ENCODE measurements at regions of chr3 and their contacts with region 1.

Region 1: GRCh38 chr3:139427283-139427993 is 38.0 kb upstream of the COPB2 start:
- DNase-seq: no peak
- ATAC-seq: peak; percentile 95 to 97
- H3K4me3 ChIP-seq: no peak overlapping the region
- H3K27ac ChIP-seq: no peak overlapping the region
- H3K4me1 ChIP-seq: peaks cover 9 to 11% of the 10 kb centered on the region in 2 donors
- H3K27me3 ChIP-seq: no peaks in the 10 kb centered on the region
- CTCF ChIP-seq: peak; percentile 59 to 80 (median 67)
- POLR2A ChIP-seq: no peak

Region 2: DNA sequence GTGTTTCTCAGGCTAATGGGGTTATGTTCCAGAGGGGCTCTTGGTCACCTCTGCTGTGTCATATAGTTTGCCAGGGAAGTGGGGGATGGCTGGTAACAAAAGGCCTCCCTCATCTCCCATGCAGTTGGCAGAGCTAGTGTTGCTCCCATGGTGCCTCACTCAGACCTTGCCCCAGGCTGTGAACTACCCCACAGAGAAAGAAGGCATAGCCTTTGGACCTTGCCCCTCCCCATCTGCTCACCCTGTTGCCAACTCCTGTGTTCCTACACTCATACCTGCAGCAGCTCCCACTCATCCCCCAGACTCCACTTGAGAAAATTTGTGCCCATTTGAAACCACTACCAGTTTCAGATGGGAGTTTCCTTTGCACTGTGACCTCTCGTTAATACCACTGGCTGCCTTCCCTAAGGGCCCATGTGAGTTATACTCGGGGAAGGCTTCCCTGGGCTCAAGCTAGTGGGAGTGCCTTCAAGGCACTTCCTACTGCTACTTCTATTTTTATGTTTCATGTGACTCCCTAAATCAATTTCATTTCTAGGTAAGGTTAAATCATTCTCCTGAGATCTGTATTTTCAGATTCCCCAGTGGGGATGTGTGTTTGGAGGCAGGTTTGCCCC is 12.7 kb before region 1 on chr3:
- in situ Hi-C with region 1: no loop called
- intact Hi-C with region 1: no loop called
- DNase-seq: no peak
- ATAC-seq: no peak
- H3K4me3 ChIP-seq: no peak overlapping the region
- H3K27ac ChIP-seq: no peak overlapping the region
- H3K4me1 ChIP-seq: peaks cover 0 to 4% of the 10 kb centered on the region in 2 donors
- H3K27me3 ChIP-seq: no peaks in the 10 kb centered on the region
- CTCF ChIP-seq: no peak
- POLR2A ChIP-seq: no peak

Region 3: DNA sequence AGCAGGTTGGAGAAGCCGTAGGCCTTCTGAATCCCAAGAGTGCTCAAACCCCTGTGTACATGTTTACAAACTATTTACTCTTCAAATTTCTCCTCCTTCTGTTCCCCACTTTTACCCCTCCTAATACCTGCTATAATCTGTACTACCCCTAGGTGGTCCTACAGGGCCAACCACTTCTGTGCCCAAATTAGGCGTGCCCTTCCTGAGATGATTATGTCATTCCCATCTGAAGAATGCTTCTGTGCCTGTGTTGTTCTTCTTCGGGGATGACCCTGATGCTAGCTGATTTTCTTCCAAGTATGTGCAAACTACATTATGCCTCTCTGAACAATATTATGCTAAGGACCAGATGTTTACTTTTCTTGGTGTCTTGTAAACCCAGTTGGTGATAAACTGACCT is 28.4 kb after region 1 on chr3:
- in situ Hi-C with region 1: no loop called
- intact Hi-C with region 1: no loop called
- DNase-seq: no peak
- ATAC-seq: no peak
- H3K4me3 ChIP-seq: no peak overlapping the region
- H3K27ac ChIP-seq: no peak overlapping the region
- H3K4me1 ChIP-seq: no peaks in the 10 kb centered on the region
- H3K27me3 ChIP-seq: no peaks in the 10 kb centered on the region
- CTCF ChIP-seq: no peak
- POLR2A ChIP-seq: no peak

Region 4: DNA sequence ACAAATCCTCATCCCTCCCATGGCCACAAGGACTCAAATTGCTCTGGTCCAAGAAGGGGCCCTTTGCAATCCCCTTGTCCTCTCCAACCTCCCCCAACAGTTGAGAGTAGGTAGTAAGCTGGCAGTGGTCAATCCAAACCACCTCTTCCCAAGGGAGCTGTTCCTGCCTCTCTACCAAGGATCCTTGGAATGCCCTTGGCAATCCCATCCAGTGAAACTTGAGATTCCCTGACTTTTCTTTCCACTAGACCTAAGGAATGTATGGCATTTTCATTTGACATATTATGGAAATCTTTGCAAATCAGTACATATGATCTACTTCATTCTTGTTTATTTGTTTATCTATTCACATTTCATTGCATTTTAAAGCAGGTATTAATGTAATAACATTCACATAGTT is 53.7 kb after region 1 on chr3:
- in situ Hi-C with region 1: no loop called
- intact Hi-C with region 1: no loop called
- DNase-seq: no peak
- ATAC-seq: no peak
- H3K4me3 ChIP-seq: no peak overlapping the region
- H3K27ac ChIP-seq: no peak overlapping the region
- H3K4me1 ChIP-seq: no peaks in the 10 kb centered on the region
- H3K27me3 ChIP-seq: no peaks in the 10 kb centered on the region
- CTCF ChIP-seq: no peak
- POLR2A ChIP-seq: no peak

Region 5: GRCh38 chr3:139561959-139562676 is 134.7 kb after region 1 on chr3:
- in situ Hi-C with region 1: loop called in 1 of 4 experiments (anchors 25 kb)
- intact Hi-C with region 1: loop called (anchors 2 kb)
- DNase-seq: no peak
- ATAC-seq: peak; percentile 23 to 41
- H3K4me3 ChIP-seq: no peak overlapping the region
- H3K27ac ChIP-seq: no peak overlapping the region
- H3K4me1 ChIP-seq: no peaks in the 10 kb centered on the region
- H3K27me3 ChIP-seq: no peaks in the 10 kb centered on the region
- CTCF ChIP-seq: peak in 3 of 5 experiments; percentile 37 to 50 (median 43)
- POLR2A ChIP-seq: no peak

Region 6: GRCh38 chr3:140863580-140864009 is 1436.2 kb after region 1 on chr3:
- in situ Hi-C with region 1: loop called (anchors 10 to 25 kb)
- intact Hi-C with region 1: loop called (anchors 2 kb)
- DNase-seq: peak in 1 of 2 donors; percentile 25
- ATAC-seq: peak in 1 of 2 donors; percentile 58
- H3K4me3 ChIP-seq: no peak overlapping the region
- H3K27ac ChIP-seq: no peak overlapping the region
- H3K4me1 ChIP-seq: no peaks in the 10 kb centered on the region
- H3K27me3 ChIP-seq: no peaks in the 10 kb centered on the region
- CTCF ChIP-seq: peak in 4 of 5 experiments; percentile 7 to 52 (median 45)
- POLR2A ChIP-seq: no peak